CD4-positive, alpha-beta T cell (primary cell): ENCODE measurements at regions of chr14 and their contacts with region 1.

Region 1: GRCh38 chr14:24442273-24443052 is at the start of gene SDR39U1:
- DNase-seq: peak; percentile 90 to 100 (median 96)
- ATAC-seq: peak; percentile 86
- H3K4me3 ChIP-seq: peak within 1 kb of the TSS; percentile 88
- H3K4me3 Mint-ChIP-seq: peak within 1 kb of the TSS; percentile 88
- H3K27ac ChIP-seq: peak within 1 kb of the TSS; percentile 93 to 99
- H3K27ac Mint-ChIP-seq: peak within 1 kb of the TSS; percentile 90
- H3K4me1 ChIP-seq: peaks cover 32% of the 10 kb centered on the region
- H3K4me1 Mint-ChIP-seq: peaks cover 53% of the 10 kb centered on the region
- H3K27me3 ChIP-seq: no peaks in the 10 kb centered on the region
- H3K27me3 Mint-ChIP-seq: no peaks in the 10 kb centered on the region
- CTCF ChIP-seq: no peak
- total RNA-seq, gene SDR39U1: 71.7 to 74.7 TPM

Region 2: DNA sequence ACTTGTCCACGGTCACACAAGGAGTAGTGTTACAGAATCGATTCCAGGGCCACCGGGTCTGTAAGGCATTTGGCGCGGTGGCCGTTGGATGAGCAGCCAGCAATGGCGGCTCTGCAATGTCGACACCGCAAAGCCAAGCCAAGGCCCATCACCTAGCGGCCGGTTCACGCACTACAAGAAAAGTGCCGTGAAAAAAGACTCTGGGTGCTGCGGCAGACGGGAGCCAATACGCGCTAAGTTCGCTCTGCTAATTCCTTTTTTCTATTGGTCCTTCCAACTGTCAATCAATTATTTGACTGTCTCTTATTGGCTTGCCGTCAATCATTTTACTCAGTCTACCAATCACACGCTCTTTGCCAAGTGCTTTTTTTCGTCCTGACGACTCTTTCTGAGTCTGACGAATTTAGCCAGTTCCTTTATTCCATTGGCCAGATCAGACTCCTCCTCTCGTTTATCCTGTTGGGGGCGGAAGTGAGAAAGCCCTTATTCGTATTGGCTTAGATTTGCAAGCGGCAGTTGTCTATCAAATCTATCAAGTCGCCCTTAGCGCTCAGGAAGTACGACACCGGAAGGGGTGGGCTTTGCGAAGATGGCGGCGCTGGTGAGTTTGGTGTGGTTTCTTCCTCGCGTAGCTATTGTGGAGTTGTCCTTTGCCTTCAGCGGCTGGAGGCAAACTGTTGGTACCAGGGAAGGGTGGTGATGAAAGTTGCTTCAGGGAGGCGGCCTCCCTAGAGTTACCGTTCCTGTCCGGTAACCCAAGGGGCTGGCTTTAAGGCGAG is 973.1 kb before region 1 on chr14 and contains the start of gene NGDN:
- CTCF ChIA-PET with region 1: no interaction called
- POLR2A ChIA-PET with region 1: no interaction called
- intact Hi-C with region 1: loop called in 1 of 2 experiments (anchors 5 kb)
- DNase-seq: peak; percentile 81 to 99 (median 88)
- ATAC-seq: peak; percentile 90
- H3K4me3 ChIP-seq: peak within 1 kb of the TSS; percentile 87
- H3K4me3 Mint-ChIP-seq: no peak within 1 kb of the TSS
- H3K27ac ChIP-seq: peak within 1 kb of the TSS; percentile 67 to 92
- H3K27ac Mint-ChIP-seq: no peak within 1 kb of the TSS
- H3K4me1 ChIP-seq: peaks cover 14% of the 10 kb centered on the region
- H3K4me1 Mint-ChIP-seq: peaks cover 7% of the 10 kb centered on the region
- H3K27me3 ChIP-seq: no peaks in the 10 kb centered on the region
- H3K27me3 Mint-ChIP-seq: no peaks in the 10 kb centered on the region
- CTCF ChIP-seq: peak; percentile 74
- total RNA-seq, gene NGDN: 146 to 149 TPM

Region 3: DNA sequence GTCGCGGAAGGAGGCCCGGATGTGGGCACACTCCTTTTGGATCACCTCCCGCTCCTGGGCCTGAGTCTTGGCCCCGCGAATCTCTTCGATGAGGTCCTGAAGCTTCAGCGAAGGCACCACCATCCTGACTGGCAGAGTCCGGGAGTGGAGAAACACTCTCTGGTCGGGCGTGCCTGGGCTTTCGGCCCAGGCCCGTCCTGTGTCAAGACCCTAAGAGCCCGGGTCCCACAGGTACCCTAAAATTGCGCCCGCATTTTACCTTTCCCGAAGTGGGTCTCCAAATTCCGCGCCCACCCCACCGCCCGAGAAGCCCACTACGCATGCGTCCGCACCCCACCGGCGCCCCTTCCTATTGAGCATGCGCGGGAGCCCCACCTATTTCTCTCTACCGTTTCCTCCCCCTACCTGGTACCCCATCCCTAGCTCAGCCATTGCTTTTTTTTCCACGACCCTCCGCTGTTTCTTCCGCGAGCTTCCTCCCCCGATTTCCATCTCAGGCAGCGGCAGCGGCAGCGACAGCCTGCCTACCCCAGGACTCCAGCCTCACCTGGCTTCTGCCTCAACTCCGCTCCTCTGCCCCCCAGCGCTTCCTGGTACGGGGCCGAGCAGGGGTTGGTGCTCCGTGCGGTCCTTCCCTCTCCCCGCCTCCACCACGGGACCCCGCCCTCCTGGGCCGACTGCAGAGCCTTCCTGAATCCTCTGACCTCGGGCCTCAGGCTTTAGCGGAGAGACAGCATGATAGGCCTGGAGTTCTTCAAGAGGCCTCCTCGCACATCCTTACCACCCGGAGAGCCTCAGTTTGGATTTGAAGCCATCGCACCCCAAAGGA is 875.1 kb before region 1 on chr14 and contains the start of gene AP1G2:
- CTCF ChIA-PET with region 1: no interaction called
- POLR2A ChIA-PET with region 1: no interaction called
- intact Hi-C with region 1: loop called in 1 of 2 experiments (anchors 5 kb)
- DNase-seq: peak; percentile 69 to 94 (median 83)
- ATAC-seq: peak; percentile 91
- H3K4me3 ChIP-seq: peak within 1 kb of the TSS; percentile 75
- H3K4me3 Mint-ChIP-seq: peak within 1 kb of the TSS; percentile 99
- H3K27ac ChIP-seq: peak within 1 kb of the TSS; percentile 75 to 79
- H3K27ac Mint-ChIP-seq: peak within 1 kb of the TSS; percentile 96
- H3K4me1 ChIP-seq: peaks cover 40% of the 10 kb centered on the region
- H3K4me1 Mint-ChIP-seq: peaks cover 52% of the 10 kb centered on the region
- H3K27me3 ChIP-seq: no peaks in the 10 kb centered on the region
- H3K27me3 Mint-ChIP-seq: peaks cover 7% of the 10 kb centered on the region
- CTCF ChIP-seq: no peak
- total RNA-seq, gene AP1G2: 193 to 198 TPM

Region 4: DNA sequence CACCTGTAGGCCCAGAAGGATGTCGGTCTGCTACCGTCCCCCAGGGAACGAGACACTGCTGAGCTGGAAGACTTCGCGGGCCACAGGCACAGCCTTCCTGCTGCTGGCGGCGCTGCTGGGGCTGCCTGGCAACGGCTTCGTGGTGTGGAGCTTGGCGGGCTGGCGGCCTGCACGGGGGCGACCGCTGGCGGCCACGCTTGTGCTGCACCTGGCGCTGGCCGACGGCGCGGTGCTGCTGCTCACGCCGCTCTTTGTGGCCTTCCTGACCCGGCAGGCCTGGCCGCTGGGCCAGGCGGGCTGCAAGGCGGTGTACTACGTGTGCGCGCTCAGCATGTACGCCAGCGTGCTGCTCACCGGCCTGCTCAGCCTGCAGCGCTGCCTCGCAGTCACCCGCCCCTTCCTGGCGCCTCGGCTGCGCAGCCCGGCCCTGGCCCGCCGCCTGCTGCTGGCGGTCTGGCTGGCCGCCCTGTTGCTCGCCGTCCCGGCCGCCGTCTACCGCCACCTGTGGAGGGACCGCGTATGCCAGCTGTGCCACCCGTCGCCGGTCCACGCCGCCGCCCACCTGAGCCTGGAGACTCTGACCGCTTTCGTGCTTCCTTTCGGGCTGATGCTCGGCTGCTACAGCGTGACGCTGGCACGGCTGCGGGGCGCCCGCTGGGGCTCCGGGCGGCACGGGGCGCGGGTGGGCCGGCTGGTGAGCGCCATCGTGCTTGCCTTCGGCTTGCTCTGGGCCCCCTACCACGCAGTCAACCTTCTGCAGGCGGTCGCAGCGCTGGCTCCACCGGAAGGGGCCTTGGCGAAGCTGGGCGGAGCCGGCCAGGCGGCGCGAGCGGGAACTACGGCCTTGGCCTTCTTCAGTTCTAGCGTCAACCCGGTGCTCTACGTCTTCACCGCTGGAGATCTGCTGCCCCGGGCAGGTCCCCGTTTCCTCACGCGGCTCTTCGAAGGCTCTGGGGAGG is 131.5 kb before region 1 on chr14 and contains the start of gene LTB4R:
- CTCF ChIA-PET with region 1: no interaction called
- POLR2A ChIA-PET with region 1: interaction called, 10 read pairs
- intact Hi-C with region 1: no loop called
- DNase-seq: peak; percentile 47 to 91 (median 61)
- ATAC-seq: peak; percentile 81
- H3K4me3 ChIP-seq: peak within 1 kb of the TSS; percentile 65
- H3K4me3 Mint-ChIP-seq: peak within 1 kb of the TSS; percentile 88
- H3K27ac ChIP-seq: peak within 1 kb of the TSS; percentile 59 to 73
- H3K27ac Mint-ChIP-seq: peak within 1 kb of the TSS; percentile 76
- H3K4me1 ChIP-seq: peaks cover 80% of the 10 kb centered on the region
- H3K4me1 Mint-ChIP-seq: peaks cover 80% of the 10 kb centered on the region
- H3K27me3 ChIP-seq: no peaks in the 10 kb centered on the region
- H3K27me3 Mint-ChIP-seq: no peaks in the 10 kb centered on the region
- CTCF ChIP-seq: peak; percentile 45
- total RNA-seq, gene LTB4R: 15.6 to 18.3 TPM

Region 5: DNA sequence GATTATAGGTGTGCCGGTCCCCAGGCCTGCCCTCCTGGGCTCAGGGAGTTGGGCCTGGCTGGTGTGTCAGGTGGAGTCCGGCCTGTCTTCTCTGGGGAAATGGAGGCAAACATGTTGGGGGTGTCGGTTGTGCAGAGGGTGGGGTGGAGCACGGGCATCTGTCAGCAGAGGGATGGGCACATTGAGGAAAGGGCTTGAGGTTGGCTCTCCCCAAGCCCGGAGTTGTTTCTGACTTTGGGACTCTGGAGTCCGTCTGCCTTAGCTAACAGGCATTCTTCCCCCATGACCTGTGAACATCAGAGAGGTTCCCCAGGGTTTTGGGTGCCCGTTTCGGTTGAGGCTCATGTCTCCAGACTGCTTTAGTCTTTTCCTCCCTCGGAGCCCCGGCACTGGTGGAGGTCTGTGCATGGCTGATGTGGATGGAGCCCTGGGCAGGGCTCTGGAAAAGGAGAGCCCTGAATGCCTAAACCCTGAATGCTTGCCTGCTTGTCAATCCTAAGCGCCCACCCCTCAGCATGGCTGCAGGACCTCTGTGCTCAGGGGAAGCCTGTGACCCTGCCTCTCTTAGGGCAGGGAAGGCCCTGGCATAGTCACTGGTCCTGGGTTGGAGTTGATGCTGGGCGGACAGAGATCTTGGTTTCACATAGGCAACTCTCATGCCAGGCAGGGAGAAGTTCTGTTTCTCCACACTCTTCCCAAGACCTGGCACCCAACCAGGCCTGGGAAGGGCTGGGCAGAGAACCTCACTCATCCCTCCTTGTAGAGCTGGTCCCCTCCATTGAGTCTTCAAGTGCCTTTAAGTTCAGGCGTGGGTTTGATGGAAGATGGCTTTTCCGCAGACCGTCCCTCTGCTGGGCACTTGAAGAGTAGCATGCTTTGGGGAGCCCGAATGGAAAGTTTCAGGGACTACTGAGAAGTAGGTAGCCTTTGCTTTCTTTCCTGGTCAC is 30.7 kb before region 1 on chr14:
- CTCF ChIA-PET with region 1: no interaction called
- POLR2A ChIA-PET with region 1: no interaction called
- intact Hi-C with region 1: no loop called
- DNase-seq: peak in 5 of 14 experiments; percentile 18 to 65 (median 46)
- ATAC-seq: peak; percentile 65
- H3K4me3 ChIP-seq: no peak overlapping the region
- H3K4me3 Mint-ChIP-seq: no peak overlapping the region
- H3K27ac ChIP-seq: no peak overlapping the region
- H3K27ac Mint-ChIP-seq: no peak overlapping the region
- H3K4me1 ChIP-seq: no peaks in the 10 kb centered on the region
- H3K4me1 Mint-ChIP-seq: no peaks in the 10 kb centered on the region
- H3K27me3 ChIP-seq: peaks cover 0 to 5% of the 10 kb centered on the region in 2 experiments
- H3K27me3 Mint-ChIP-seq: peaks cover under 1% of the 10 kb centered on the region
- CTCF ChIP-seq: peak; percentile 57